Caco-2 (cell line): ENCODE measurements at regions of chr2 and their contacts with region 1.

Region 1: DNA sequence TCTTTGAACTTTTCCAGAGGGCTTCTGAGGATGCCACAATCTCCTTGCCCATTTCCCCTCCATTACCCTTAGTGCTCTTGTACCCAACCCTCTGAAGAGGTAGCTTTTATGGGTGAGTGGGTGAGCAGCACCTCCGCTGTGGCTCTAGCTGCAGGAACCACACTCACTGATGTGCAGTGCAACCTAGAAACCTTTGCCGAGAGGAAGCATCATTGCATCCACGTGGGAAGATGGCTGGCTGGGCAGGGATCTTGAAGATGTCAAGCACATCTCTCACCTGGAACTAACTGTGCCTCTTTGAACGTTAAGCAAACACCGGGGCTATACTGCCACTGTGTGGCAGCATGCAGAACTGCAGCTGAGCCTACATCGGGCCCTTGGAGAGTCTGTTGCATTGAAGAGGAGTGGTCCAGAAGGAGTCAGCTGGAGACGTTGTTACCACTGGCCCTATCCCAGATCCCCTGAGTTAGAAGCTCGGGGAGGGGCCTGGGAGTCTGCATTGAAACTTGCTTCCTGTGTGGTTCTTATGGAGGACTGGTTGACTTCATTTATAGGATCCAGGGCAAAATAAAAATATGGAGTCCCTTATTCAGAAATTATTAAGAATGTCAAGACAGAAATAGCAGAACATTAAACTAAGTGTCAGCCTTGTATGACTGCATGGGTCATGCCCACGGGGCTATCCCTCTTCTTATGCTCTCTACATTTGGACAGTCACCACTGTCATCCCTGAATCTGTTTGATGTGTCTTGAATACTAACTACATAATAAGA is 28.7 kb downstream of the IGFBP5 start:
- DNase-seq: peak; percentile 73 to 85
- H3K4me3 ChIP-seq: no peak overlapping the region
- H3K4me3 Mint-ChIP-seq: no peak overlapping the region
- H3K27ac Mint-ChIP-seq: no peak overlapping the region
- H3K4me1 ChIP-seq: no peaks in the 10 kb centered on the region
- H3K4me1 Mint-ChIP-seq: no peaks in the 10 kb centered on the region
- H3K27me3 ChIP-seq: no peaks in the 10 kb centered on the region
- H3K27me3 Mint-ChIP-seq: peaks cover 30% of the 10 kb centered on the region
- CTCF ChIP-seq: peak; percentile 95 to 97

Region 2: DNA sequence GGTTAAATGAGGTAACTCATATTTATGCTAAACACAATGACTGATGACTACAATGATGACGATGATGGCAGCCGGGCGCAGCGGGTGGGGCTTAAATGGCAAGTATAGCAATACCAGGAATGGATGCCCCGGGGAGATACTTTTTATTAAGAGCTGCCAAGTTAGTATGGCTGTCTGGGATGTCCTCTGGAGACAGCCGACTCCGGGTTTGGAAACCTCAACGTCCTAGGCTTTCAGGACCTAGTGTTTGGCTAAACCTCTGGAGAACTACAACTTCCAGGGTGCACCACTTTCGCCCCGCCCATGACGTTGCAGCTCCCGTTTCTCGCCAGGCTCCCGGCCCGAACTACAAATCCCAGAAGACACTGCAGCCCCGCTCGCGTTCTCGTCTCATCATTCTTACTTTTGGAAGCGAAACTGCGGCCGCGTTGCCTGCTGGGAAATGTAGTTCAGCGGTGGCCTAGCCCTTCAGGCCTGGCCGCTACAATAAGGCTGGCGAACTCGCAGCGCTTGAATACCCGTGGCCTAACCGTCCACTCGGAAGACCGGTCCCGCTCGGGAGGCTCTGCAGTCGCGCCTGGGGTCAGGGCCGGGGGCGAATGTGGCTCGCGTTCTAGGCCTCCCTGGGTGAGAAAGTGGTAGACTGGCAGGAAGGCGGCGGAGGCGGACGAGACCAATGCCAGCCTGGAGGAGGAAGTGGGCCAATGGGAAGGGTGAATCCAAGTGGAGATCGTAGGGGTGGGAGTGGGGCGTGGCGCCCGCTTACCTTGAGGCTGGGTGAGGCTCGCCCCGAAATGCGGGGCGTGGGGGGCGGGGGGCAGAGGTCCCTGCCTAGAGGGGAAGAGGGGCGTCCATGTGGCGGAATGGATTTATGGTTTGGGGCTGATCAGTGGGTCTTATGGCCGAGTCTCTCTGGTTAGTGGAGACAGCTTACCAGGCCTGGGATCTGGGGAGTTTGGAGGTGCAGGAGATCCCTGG is 254.3 kb before region 1 on chr2 and contains the start of gene SMARCAL1:
- CTCF ChIA-PET with region 1: no interaction called
- POLR2A ChIA-PET with region 1: no interaction called
- intact Hi-C with region 1: loop called (anchors 10 kb)
- DNase-seq: peak; percentile 98
- H3K4me3 ChIP-seq: peak within 1 kb of the TSS; percentile 96
- H3K4me3 Mint-ChIP-seq: peak within 1 kb of the TSS; percentile 99
- H3K27ac Mint-ChIP-seq: peak within 1 kb of the TSS; percentile 96
- H3K4me1 ChIP-seq: 0 out of 2 replicates have a peak, but pooled peaks cover 4% of the 10 kb centered on the region
- H3K4me1 Mint-ChIP-seq: no peaks in the 10 kb centered on the region
- H3K27me3 ChIP-seq: no peaks in the 10 kb centered on the region
- H3K27me3 Mint-ChIP-seq: peaks cover 3% of the 10 kb centered on the region
- CTCF ChIP-seq: no peak
- total RNA-seq, gene SMARCAL1: 24.1 and 26.0 TPM in 2 replicates

Region 3: GRCh38 chr2:216519154-216519762 is 147.4 kb before region 1 on chr2:
- CTCF ChIA-PET with region 1: interaction called, 70 read pairs
- POLR2A ChIA-PET with region 1: no interaction called
- intact Hi-C with region 1: loop called (anchors 1 kb)
- DNase-seq: peak; percentile 68 to 73
- H3K4me3 ChIP-seq: no peak overlapping the region
- H3K4me3 Mint-ChIP-seq: no peak overlapping the region
- H3K27ac Mint-ChIP-seq: no peak overlapping the region
- H3K4me1 ChIP-seq: no peaks in the 10 kb centered on the region
- H3K4me1 Mint-ChIP-seq: no peaks in the 10 kb centered on the region
- H3K27me3 ChIP-seq: no peaks in the 10 kb centered on the region
- H3K27me3 Mint-ChIP-seq: no peaks in the 10 kb centered on the region
- CTCF ChIP-seq: peak; percentile 71 to 72

Region 4: DNA sequence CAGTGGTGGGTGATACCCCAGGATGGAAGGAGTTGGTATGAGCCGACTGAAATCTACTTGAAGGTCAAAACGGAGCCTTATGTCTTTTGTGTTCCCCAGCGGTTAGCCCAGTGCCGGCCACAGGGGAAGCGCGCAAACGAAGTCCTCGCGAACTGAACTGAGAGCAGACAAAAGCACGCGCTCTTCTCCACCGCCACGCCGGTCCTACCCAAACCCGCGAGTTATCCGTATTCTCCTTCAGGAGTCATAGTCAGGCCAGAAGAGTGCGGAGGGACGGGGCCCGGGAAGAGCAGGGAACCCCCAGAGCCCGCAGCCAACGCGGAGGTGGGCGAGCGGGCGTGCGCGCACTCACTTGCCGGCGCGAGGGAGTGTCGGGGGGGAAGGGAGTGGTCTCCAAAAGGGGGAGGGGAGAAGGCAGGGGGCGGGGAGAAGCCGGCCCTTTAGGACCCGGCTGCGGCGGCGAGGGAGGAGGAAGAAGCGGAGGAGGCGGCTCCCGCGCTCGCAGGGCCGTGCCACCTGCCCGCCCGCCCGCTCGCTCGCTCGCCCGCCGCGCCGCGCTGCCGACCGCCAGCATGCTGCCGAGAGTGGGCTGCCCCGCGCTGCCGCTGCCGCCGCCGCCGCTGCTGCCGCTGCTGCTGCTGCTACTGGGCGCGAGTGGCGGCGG is 33.6 kb before region 1 on chr2 and contains the start of gene IGFBP2:
- CTCF ChIA-PET with region 1: no interaction called
- POLR2A ChIA-PET with region 1: no interaction called
- intact Hi-C with region 1: no loop called
- DNase-seq: peak; percentile 15 to 42
- H3K4me3 ChIP-seq: peak within 1 kb of the TSS; percentile 48
- H3K4me3 Mint-ChIP-seq: peak within 1 kb of the TSS; percentile 79
- H3K27ac Mint-ChIP-seq: no peak within 1 kb of the TSS
- H3K4me1 ChIP-seq: peaks cover 28% of the 10 kb centered on the region
- H3K4me1 Mint-ChIP-seq: peaks cover 21% of the 10 kb centered on the region
- H3K27me3 ChIP-seq: peaks cover 3% of the 10 kb centered on the region; the same call in 1 of the 2 replicates
- H3K27me3 Mint-ChIP-seq: peaks cover 48% of the 10 kb centered on the region
- CTCF ChIP-seq: no peak
- total RNA-seq, gene IGFBP2: 6.6 and 6.7 TPM in 2 replicates